ENCODE measurements at regions of chr9 and their contacts with region 1.

Region 1: DNA sequence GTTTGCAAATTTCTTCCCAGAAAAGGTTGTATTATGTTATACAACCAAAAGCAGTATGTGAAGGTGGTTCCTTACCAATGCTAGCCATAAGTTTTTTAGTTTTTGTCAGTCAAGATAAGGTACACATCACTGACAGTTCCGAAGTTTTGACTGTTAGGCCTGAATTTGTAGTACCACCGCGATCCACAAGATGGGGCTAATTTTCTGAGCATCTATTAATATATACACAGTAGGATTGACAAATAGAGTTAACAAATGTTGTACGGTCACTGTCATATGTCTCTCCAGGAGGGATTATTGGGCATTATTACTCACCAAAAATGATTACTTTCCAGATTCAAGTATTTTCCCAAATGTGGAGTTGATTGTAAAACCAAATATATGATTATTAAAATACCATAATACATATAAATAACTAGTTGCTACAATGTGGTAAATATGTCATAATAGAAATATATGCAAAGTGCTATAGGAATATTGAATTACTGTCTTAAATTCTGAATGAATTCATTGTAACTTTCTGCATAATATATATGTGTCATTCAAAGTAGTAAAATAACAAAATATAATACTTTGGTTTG is 28.4 kb upstream of the LRRC19 start:
- DNase-seq: peak; percentile 4 to 23
- ATAC-seq: peak; percentile 74 to 86
- H3K4me3 ChIP-seq: no peak overlapping the region
- H3K27ac ChIP-seq: no peak overlapping the region
- H3K4me1 ChIP-seq: no peaks in the 10 kb centered on the region
- H3K27me3 ChIP-seq: no peaks in the 10 kb centered on the region
- CTCF ChIP-seq: peak; percentile 49 to 83 (median 72)
- POLR2A ChIP-seq: no peak

Region 2: GRCh38 chr9:26744191-26744965 is 289.5 kb before region 1 on chr9:
- in situ Hi-C with region 1: no loop called
- intact Hi-C with region 1: no loop called
- DNase-seq: no peak
- ATAC-seq: no peak
- H3K4me3 ChIP-seq: no peak overlapping the region
- H3K27ac ChIP-seq: no peak overlapping the region
- H3K4me1 ChIP-seq: no peaks in the 10 kb centered on the region
- H3K27me3 ChIP-seq: no peaks in the 10 kb centered on the region
- CTCF ChIP-seq: peak; percentile 26 to 77 (median 41)
- POLR2A ChIP-seq: no peak

Region 3: GRCh38 chr9:27125030-27125429 is 91.1 kb after region 1 on chr9:
- in situ Hi-C with region 1: loop called in 1 of 4 experiments (anchors 25 kb)
- intact Hi-C with region 1: no loop called
- DNase-seq: peak; percentile 71 to 72
- ATAC-seq: peak; percentile 93
- H3K4me3 ChIP-seq: no peak overlapping the region
- H3K27ac ChIP-seq: peak overlapping the region; percentile 59 to 89 (median 74)
- H3K4me1 ChIP-seq: peaks cover 16 to 27% of the 10 kb centered on the region in 2 donors
- H3K27me3 ChIP-seq: no peaks in the 10 kb centered on the region
- CTCF ChIP-seq: no peak
- POLR2A ChIP-seq: no peak

Region 4: DNA sequence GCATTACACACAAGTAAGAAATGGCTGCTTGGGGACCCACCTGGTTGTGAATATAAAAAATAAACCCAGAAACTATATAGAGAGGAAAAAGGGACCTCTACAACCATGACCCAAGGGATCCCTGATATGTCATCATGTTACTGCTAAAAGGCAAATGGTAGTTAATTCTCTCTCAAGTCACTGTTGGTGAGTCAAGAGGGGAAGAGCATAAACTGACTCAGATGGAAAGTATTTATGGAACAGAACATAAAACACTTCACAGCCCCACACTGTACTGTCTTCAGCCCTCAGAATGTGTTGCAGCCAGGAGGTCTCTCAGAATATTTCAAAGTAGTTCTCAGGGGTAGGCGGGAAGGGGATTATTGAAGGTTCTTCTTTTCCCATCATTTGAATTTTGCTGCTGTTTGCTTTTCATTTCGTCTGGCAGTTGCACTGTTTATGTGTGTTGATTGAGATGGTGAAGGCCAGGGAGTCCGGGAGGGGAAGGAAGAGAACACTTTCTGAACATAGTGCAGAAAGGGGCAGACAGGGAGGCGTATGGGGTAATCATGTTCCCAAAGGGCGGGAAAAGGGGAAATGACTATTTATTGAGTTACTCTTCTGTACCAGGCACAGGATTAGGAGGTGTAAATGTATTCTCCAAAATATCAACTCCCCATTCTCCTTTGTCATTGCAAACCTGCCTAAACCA is 160.6 kb after region 1 on chr9:
- in situ Hi-C with region 1: no loop called
- intact Hi-C with region 1: loop called (anchors 2 kb)
- DNase-seq: no peak
- ATAC-seq: no peak
- H3K4me3 ChIP-seq: no peak overlapping the region
- H3K27ac ChIP-seq: no peak overlapping the region
- H3K4me1 ChIP-seq: peaks cover 0 to 12% of the 10 kb centered on the region in 2 donors
- H3K27me3 ChIP-seq: no peaks in the 10 kb centered on the region
- CTCF ChIP-seq: no peak
- POLR2A ChIP-seq: no peak

Region 5: DNA sequence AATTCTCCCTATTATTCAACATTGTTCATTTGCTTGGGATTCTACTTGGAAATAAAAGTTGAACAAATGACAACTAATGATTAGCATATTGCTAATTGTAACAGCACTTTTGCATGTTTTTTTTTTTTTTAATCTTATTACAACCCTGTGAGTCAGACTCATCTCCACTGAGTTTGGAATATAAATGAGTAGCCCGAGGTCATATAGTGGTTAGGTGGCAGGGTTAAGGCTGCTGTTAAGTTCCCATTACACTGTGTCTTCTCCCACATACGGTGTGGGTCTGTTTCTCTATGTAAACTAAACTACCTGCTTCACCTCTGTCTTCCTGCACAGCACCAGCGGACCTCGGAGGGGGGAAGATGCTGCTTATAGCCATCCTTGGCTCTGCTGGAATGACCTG is 170.7 kb after region 1 on chr9:
- in situ Hi-C with region 1: loop called in 1 of 4 experiments (anchors 10 kb)
- intact Hi-C with region 1: loop called (anchors 2 kb)
- DNase-seq: no peak
- ATAC-seq: no peak
- H3K4me3 ChIP-seq: no peak overlapping the region
- H3K27ac ChIP-seq: no peak overlapping the region
- H3K4me1 ChIP-seq: peaks cover 0 to 5% of the 10 kb centered on the region in 2 donors
- H3K27me3 ChIP-seq: no peaks in the 10 kb centered on the region
- CTCF ChIP-seq: no peak
- POLR2A ChIP-seq: no peak

Region 6: GRCh38 chr9:27247756-27248155 is 213.8 kb after region 1 on chr9:
- in situ Hi-C with region 1: no loop called
- intact Hi-C with region 1: no loop called
- DNase-seq: no peak
- ATAC-seq: no peak
- H3K4me3 ChIP-seq: no peak overlapping the region
- H3K27ac ChIP-seq: no peak overlapping the region
- H3K4me1 ChIP-seq: no peaks in the 10 kb centered on the region
- H3K27me3 ChIP-seq: no peaks in the 10 kb centered on the region
- CTCF ChIP-seq: peak in 2 of 5 experiments; percentile 12 to 42
- POLR2A ChIP-seq: no peak

Region 7: DNA sequence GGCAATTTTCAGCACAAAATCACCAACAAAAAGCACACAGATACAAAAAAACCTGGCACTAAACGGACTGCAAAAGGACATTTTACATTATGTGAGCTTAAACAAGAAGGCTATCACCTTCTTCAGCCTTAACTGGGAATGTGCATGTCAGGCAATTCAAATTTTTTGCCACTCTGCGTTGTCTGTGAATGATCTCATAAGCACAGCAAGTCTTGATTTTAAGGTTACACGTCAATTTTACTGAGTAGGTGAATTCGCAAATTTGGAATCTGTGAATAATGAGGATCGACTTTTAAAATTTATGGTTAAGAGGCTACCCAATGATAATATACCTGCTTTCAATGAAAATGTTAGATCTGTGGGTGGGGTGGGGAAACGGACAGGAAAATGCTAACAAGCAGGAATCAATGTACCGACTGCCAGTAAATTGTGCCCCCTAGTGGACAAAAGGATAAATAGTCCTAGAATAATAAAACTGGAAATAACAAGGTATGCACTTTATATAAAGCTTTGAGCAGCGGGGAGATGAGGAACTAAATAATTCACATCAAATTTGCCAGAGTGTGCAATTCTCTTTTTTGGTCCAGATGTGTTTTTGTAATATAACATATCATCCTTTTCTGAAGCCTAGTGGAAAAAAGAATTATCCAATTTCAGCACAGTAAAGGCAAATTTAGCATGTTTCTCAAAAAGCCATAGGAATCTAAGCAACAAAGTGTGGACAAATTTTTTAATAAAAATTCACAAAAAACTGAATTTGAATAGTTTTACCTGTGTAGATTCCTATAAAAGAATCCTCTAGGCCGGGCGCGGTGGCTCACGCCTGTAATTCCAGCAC is 242.5 kb after region 1 on chr9:
- in situ Hi-C with region 1: loop called (anchors 5 to 10 kb)
- intact Hi-C with region 1: loop called (anchors 2 kb)
- DNase-seq: no peak
- ATAC-seq: peak; percentile 50 to 62
- H3K4me3 ChIP-seq: peak overlapping the region in 1 of 4 donors; percentile 16
- H3K27ac ChIP-seq: no peak overlapping the region
- H3K4me1 ChIP-seq: peaks cover 0 to 3% of the 10 kb centered on the region in 2 donors
- H3K27me3 ChIP-seq: no peaks in the 10 kb centered on the region
- CTCF ChIP-seq: peak; percentile 65 to 81 (median 72)
- POLR2A ChIP-seq: no peak

Region 8: DNA sequence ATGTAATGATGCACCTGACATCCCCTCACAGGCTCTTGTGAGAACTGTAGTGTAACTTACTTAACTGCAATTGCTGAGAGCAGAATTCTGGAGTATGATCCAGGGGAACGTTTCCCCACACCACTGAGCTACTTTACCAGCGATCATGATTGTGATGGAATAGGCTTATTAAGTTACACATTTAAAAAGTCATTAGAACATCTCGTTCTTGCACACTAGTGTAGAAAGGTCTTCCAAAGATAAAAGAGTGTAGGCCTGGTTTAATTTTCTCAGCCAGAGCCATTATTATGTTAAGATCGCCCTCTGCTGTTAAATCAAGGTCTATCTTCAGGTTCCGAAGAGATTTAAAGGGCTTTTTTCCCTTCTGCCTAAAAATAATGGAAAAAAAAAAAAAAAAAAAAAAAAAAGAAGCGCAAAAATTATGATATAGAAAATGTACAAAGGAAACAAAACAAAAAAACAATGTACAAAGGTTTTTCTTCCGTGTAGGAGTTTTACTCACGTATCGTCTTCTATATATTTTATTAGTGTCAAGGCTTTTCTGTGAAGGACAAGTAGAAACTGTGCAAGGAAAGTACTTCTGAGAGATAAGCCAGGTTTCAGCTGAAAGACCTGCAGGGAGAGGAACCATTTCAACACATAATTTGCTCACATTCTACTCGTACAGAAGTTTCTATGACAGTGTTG is 514.3 kb after region 1 on chr9:
- in situ Hi-C with region 1: loop called in 2 of 4 experiments (anchors 25 kb)
- intact Hi-C with region 1: loop called (anchors 10 kb)
- DNase-seq: peak; percentile 51 to 69
- ATAC-seq: peak; percentile 95 to 96
- H3K4me3 ChIP-seq: no peak overlapping the region
- H3K27ac ChIP-seq: peak overlapping the region; percentile 79 to 86 (median 84)
- H3K4me1 ChIP-seq: peaks cover 14 to 24% of the 10 kb centered on the region in 2 donors
- H3K27me3 ChIP-seq: no peaks in the 10 kb centered on the region
- CTCF ChIP-seq: peak; percentile 38 to 58 (median 54)
- POLR2A ChIP-seq: peak in 1 of 2 donors; percentile 59

Measured in gastrocnemius medialis (tissue), 4 donors.